Sigmoid colon (tissue), 7 donors: ENCODE measurements at regions of chr13 and their contacts with region 1.

Region 1: GRCh38 chr13:32586080-32586900 is at the start of gene PDS5B:
- DNase-seq: peak; percentile 98
- H3K4me3 ChIP-seq: peak within 1 kb of the TSS; percentile 72 to 87 (median 84)
- H3K27ac ChIP-seq: peak within 1 kb of the TSS; percentile 90 to 99 (median 93)
- H3K4me1 ChIP-seq: peaks cover 0 to 39% (median 29%) of the 10 kb centered on the region in 4 donors
- H3K27me3 ChIP-seq: no peaks in the 10 kb centered on the region
- CTCF ChIP-seq: peak; percentile 42 to 88 (median 51)
- EP300 ChIP-seq: no peak
- POLR2A ChIP-seq: peak; percentile 16 to 45
- total RNA-seq, gene PDS5B: 52.8 to 65.0 (median 59.9) TPM

Region 2: GRCh38 chr13:32639502-32640105 is 53.3 kb after region 1 on chr13:
- intact Hi-C with region 1: loop called (anchors 1 kb)
- DNase-seq: peak; percentile 77
- H3K4me3 ChIP-seq: no peak overlapping the region
- H3K27ac ChIP-seq: no peak overlapping the region
- H3K4me1 ChIP-seq: peaks cover 0 to 37% (median 16%) of the 10 kb centered on the region in 4 donors
- H3K27me3 ChIP-seq: no peaks in the 10 kb centered on the region
- CTCF ChIP-seq: peak; percentile 64 to 77 (median 74)
- EP300 ChIP-seq: no peak
- POLR2A ChIP-seq: no peak

Region 3: GRCh38 chr13:32791545-32792172 is 205.4 kb after region 1 on chr13:
- intact Hi-C with region 1: no loop called
- DNase-seq: no peak
- H3K4me3 ChIP-seq: no peak overlapping the region
- H3K27ac ChIP-seq: no peak overlapping the region
- H3K4me1 ChIP-seq: no peaks in the 10 kb centered on the region
- H3K27me3 ChIP-seq: no peaks in the 10 kb centered on the region
- CTCF ChIP-seq: no peak
- EP300 ChIP-seq: no peak
- POLR2A ChIP-seq: no peak

Region 4: GRCh38 chr13:33125821-33126570 is 539.7 kb after region 1 on chr13:
- intact Hi-C with region 1: loop called (anchors 10 kb)
- DNase-seq: peak; percentile 89
- H3K4me3 ChIP-seq: no peak overlapping the region
- H3K27ac ChIP-seq: peak overlapping the region; percentile 82 to 87 (median 85)
- H3K4me1 ChIP-seq: peaks cover 0 to 63% (median 60%) of the 10 kb centered on the region in 4 donors
- H3K27me3 ChIP-seq: no peaks in the 10 kb centered on the region
- CTCF ChIP-seq: no peak
- EP300 ChIP-seq: no peak
- POLR2A ChIP-seq: no peak

Region 5: DNA sequence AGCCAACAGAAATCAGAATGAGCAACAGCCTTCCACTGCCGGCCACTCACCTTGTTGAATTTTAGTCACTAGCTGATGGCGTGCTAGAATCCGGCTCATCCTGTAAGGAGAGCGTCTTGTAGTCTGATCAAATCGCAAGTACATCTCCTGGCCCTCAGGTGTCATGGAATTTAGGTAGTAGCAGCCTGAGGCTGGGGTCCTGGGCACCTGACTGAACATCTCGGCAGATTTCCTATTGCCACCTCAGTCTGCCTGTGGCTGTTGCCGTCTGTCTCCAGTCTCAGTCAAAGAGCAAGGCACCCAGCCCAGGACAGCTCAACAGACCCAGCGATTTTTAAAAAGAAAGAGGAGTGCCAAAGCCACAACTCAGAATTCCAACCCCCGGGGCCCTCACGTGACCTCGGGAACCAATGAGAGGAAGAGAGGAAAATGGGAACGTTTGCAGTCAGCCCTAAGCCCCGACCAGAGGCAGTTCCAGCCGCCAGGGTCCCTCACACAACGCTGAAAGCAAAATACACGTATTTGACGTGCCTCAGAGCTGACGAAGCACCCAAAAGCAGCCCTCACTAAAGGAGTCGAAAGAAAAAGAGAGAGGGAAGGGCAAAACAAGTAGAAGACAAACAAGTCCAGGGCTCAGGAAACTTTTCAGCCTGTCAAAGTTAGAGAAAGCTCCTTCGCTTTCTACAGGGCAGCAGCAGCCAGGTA is 699.3 kb after region 1 on chr13 and contains the start of gene STARD13:
- intact Hi-C with region 1: loop called (anchors 5 kb)
- DNase-seq: peak; percentile 98
- H3K4me3 ChIP-seq: peak within 1 kb of the TSS; percentile 60 to 69 (median 62)
- H3K27ac ChIP-seq: peak within 1 kb of the TSS; percentile 89 to 94 (median 92)
- H3K4me1 ChIP-seq: peaks cover 0 to 56% (median 40%) of the 10 kb centered on the region in 4 donors
- H3K27me3 ChIP-seq: no peaks in the 10 kb centered on the region
- CTCF ChIP-seq: peak; percentile 35 to 64 (median 44)
- EP300 ChIP-seq: no peak
- POLR2A ChIP-seq: peak; percentile 89 to 90
- total RNA-seq, gene STARD13: 66.7 to 102 (median 81.8) TPM